Left cardiac atrium (tissue), 4 donors: ENCODE measurements at regions of chr5 and their contacts with region 1.

Region 1: DNA sequence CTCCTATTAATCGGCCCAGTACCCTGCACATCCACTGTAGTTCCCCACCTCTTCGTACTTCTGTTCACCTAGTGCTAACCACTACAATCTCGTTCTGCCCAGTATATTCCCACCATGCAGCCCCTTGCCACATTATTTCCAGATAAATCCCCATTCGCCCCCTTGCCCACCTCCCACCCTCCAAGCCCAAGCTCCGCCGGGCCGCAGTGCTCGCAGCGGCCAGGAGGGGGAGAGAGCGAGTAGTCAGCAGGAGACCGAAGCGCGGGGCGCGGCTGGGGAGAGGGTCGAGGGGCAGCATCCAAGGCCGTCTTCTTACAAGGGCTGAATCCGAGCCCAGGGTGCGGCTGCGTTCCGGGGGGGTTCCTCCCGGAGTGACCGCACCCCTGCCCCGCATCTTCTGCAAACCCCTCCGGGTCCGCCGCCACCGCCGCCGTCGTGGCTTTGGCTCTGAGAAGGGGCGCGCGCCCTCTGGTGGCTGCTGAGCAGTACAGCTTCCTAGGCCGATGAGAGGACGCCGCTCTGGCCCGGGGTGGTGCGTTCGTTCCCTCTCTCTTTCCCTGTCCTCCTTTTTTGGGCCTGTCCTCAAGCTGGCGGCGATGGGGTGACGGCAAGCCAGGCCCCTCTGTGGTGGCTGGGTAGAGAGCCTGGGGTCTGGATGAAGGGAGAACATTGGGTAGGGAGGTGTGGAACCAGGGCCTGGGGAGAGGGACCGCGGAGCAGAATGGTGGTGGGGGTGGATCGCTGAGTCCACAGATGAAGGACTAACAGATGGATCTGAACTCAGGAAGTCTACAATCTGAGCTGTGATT is 30.0 kb upstream of the PSD2 start:
- DNase-seq: peak; percentile 81
- ATAC-seq: peak; percentile 88 to 90

Region 2: DNA sequence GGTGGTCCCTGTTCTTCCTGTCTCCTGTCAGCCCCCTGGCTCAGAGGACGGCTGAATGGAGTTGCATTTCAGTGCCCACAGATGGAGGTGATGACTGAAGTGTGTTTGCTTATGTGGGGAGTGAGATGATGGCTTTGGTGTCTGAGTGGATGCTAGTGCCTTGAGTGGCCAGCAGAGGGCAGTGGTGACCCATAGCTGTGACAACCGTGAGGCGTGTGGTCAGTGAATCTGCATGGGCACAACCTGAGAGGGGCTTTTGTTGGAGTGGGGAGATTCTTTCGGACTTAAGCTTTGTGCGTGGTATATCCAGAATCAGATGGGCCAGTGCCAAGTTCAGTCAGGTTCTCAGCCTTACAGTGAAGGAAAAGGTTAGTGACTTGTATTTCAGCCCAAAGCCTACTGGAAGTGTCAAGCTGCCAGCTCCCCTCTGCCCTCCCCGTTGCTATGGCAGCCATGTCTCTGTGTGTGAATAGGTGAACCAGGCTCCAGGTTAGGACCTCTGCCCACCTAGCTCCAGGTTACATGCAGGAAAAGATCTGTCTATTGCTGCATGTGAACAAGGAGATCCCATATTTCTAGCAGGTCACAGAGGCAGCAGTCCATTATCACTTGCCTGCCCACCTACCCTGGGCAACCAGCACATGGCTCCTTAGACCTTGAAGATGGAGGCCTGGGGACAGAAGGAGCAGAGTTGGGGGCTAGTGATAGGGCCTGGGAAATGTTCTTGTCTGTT is 132.2 kb before region 1 on chr5:
- intact Hi-C with region 1: loop called (anchors 1 to 2 kb)
- DNase-seq: peak; percentile 67
- ATAC-seq: peak; percentile 28 to 32

Region 3: DNA sequence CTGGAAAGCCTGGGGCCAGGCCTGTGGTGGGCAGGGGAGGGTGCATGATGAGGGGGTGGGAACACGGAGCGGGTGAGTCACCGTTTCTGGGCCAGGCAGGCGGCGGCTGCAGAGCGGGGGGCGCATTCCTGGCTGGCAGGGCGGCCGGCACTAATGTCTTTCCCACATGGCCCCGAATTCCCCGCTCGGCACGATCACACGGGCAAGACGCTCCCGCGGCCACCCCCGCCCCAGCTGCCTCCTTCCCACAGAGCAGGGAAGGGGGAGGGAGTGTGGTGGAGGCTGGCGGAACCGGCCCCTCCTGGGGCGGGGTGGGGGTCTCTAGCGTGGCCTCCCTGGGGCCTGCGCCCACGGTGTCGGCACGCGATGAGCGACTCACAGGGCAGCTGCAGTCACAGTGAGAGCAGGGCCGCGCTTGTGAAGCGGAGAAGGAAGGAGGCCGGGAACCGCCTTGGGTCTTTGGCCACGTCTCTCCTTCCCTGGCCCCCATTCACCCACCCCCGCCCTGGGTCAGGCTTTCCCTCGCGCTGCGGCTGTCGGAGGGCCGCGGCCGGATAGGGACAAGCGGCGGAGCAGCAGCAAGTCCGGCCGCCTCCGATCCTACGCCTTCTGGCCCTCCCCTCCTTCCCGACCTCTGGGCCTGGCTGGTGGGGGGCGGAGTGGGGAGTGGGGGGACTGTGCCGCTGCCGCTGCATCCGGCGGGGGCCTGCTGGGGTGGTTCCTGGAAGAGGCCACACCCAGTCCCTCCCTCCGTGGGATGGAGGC is 68.5 kb before region 1 on chr5:
- intact Hi-C with region 1: loop called (anchors 10 kb)
- DNase-seq: peak; percentile 91
- ATAC-seq: peak; percentile 78 to 82

Region 4: GRCh38 chr5:139711067-139711905 is 54.3 kb before region 1 on chr5:
- intact Hi-C with region 1: loop called in 1 of 2 experiments (anchors 2 kb)
- DNase-seq: peak; percentile 43
- ATAC-seq: peak; percentile 56 to 67